Vagina (tissue), 2 donors: ENCODE measurements at regions of chr3 and their contacts with region 1.

Region 1: GRCh38 chr3:187811585-187812250 is 66.5 kb upstream of the BCL6 start:
- DNase-seq: peak in 1 of 2 donors; percentile 54
- H3K4me3 ChIP-seq: no peak overlapping the region
- H3K27ac ChIP-seq: no peak overlapping the region
- H3K4me1 ChIP-seq: peaks cover 27% of the 10 kb centered on the region
- H3K27me3 ChIP-seq: no peaks in the 10 kb centered on the region
- CTCF ChIP-seq: no peak
- POLR2A ChIP-seq: no peak

Region 2: GRCh38 chr3:187828579-187829452 is 17.1 kb after region 1 on chr3:
- intact Hi-C with region 1: no loop called
- DNase-seq: no peak
- H3K4me3 ChIP-seq: no peak overlapping the region
- H3K27ac ChIP-seq: no peak overlapping the region
- H3K4me1 ChIP-seq: no peaks in the 10 kb centered on the region
- H3K27me3 ChIP-seq: no peaks in the 10 kb centered on the region
- CTCF ChIP-seq: no peak
- POLR2A ChIP-seq: no peak

Region 3: GRCh38 chr3:189813647-189814240 is 2002.0 kb after region 1 on chr3:
- intact Hi-C with region 1: loop called (anchors 5 kb)
- DNase-seq: no peak
- H3K4me3 ChIP-seq: no peak overlapping the region
- H3K27ac ChIP-seq: peak overlapping the region; percentile 22
- H3K4me1 ChIP-seq: no peaks in the 10 kb centered on the region
- H3K27me3 ChIP-seq: no peaks in the 10 kb centered on the region
- CTCF ChIP-seq: no peak
- POLR2A ChIP-seq: no peak